Activated T-helper 1 cell treated with anti-CD3 and anti-CD28 coated beads, Interleukin-12 subunit alpha, Interleukin-12 subunit beta, Interleukin-2, Interleukin-4 antibody, amounts not matched to agents 30 ng/mL and 10 ng/mL and 1 ng/mL, durations not matched to agents 14 hours and 24 hours and 36 hours (primary cell): ENCODE measurements at regions of chr2 and their contacts with region 1.

Region 1: DNA sequence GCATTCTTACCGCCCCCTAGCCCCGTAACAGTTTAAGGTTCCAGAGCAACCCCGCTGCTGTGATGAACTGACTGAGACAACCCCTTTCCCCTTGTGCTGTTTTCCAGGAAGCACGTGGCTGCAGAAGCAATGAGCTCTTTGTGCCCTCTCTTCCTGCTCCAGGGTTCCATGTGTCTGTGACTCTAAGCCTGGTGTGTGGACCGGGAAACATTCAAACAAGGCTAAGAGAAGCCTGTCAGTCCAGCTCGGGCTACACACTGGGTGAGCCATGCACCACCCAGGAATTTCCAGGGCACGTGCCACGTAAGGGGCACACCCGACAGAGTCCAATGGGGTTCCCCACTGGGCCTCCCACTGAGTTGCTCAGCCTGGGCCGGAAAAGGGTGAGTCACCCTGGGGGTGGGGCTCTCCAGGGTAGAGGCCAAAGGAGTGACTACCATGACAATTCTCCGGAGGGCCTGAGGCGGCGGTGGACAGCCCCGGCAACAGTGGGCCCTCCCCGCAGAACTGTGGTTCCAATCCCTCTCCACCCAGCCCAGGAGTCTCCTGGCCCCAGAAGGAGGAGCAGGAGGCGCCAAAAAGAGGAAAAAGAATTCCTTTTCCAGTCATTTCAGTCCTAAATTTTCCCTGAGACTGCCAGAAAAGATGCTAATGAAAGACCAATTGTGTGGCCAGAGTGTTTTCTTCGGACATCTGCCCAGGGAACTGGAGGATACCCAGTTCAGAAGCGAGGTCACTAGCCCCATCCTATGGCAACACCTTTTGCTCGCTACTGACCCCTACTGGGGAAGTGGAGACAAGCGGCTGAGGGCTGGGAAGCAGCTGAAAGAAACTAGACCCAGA is 157.8 kb upstream of the SLC1A4 start:
- DNase-seq: peak; percentile 73
- H3K4me3 Mint-ChIP-seq: no peak overlapping the region
- H3K27ac Mint-ChIP-seq: peak overlapping the region; percentile 73
- H3K4me1 Mint-ChIP-seq: peaks cover 31% of the 10 kb centered on the region
- H3K27me3 Mint-ChIP-seq: peaks cover 1% of the 10 kb centered on the region

Region 2: GRCh38 chr2:64260817-64261216 is 570.5 kb before region 1 on chr2:
- intact Hi-C with region 1: no loop called
- DNase-seq: peak; percentile 29
- H3K4me3 Mint-ChIP-seq: peak overlapping the region; percentile 68
- H3K27ac Mint-ChIP-seq: peak overlapping the region; percentile 87
- H3K4me1 Mint-ChIP-seq: peaks cover 10% of the 10 kb centered on the region
- H3K27me3 Mint-ChIP-seq: peaks cover 2% of the 10 kb centered on the region

Region 3: DNA sequence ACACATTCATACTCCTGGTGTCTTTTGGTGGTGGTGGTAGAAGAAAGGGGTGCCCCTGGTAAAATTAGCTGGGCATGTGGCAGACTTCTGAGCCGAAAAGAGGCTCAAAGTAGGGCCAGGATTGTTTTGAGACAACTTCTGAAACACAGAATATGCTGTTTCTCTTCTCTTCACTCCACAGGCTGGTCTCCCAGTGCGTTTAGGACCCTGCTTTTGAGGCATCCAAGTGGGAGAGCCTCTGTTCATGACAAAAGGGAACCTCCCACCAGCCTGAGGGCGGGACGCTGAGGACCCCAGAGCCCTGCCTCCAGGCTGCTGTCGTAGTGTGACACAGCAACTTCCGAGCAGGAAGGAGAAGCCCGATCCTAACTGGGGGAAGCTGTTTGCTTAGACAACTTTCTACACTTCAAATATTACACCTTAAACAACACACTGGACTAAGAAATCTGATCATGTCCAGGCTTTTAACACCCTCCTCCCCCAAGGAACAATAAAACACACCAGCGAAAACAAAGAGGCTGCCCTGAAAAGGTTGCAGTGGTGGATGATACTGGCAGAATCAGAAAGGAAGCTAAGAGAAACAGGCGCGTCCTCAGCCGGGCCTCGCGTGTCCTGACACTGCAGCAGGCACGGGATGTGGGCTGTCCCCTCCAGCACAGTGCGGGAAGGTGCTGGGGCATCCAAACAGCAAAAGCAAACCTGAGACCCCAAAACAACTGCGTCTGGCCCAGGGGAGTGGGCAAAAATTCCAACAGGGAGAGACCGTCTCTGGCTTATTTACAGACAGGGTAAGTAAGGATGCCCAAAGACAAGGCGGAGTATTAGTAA is 187.0 kb before region 1 on chr2:
- intact Hi-C with region 1: loop called (anchors 1 kb)
- DNase-seq: peak; percentile 51
- H3K4me3 Mint-ChIP-seq: peak overlapping the region; percentile 86
- H3K27ac Mint-ChIP-seq: peak overlapping the region; percentile 90
- H3K4me1 Mint-ChIP-seq: peaks cover 82% of the 10 kb centered on the region
- H3K27me3 Mint-ChIP-seq: peaks cover 3% of the 10 kb centered on the region

Region 4: DNA sequence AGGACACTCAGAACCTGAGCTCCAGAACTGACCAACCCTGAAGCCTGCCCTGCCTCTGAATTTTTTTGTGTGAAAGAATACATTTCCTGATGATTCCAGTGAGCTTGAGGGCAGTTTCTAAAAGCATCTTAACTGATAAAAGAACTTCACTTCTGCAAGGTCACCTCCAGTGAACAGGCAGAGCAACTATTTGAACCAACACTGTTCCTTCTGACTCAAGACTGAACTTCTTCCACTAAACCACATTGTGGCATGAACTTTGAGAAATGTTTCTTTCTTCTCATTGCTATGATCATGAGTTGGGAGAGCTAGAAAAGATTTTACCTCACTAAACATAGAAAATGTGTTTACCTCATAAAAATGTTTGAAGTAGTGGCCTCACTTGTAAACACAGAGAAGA is 93.8 kb before region 1 on chr2:
- intact Hi-C with region 1: loop called (anchors 2 kb)
- DNase-seq: no peak
- H3K4me3 Mint-ChIP-seq: peak overlapping the region; percentile 46
- H3K27ac Mint-ChIP-seq: peak overlapping the region; percentile 91
- H3K4me1 Mint-ChIP-seq: peaks cover 54% of the 10 kb centered on the region
- H3K27me3 Mint-ChIP-seq: no peaks in the 10 kb centered on the region

Region 5: GRCh38 chr2:64807417-64807816 is 23.9 kb before region 1 on chr2:
- intact Hi-C with region 1: loop called (anchors 1 kb)
- DNase-seq: peak; percentile 12
- H3K4me3 Mint-ChIP-seq: peak overlapping the region; percentile 57
- H3K27ac Mint-ChIP-seq: peak overlapping the region; percentile 80
- H3K4me1 Mint-ChIP-seq: peaks cover 37% of the 10 kb centered on the region
- H3K27me3 Mint-ChIP-seq: no peaks in the 10 kb centered on the region

Region 6: DNA sequence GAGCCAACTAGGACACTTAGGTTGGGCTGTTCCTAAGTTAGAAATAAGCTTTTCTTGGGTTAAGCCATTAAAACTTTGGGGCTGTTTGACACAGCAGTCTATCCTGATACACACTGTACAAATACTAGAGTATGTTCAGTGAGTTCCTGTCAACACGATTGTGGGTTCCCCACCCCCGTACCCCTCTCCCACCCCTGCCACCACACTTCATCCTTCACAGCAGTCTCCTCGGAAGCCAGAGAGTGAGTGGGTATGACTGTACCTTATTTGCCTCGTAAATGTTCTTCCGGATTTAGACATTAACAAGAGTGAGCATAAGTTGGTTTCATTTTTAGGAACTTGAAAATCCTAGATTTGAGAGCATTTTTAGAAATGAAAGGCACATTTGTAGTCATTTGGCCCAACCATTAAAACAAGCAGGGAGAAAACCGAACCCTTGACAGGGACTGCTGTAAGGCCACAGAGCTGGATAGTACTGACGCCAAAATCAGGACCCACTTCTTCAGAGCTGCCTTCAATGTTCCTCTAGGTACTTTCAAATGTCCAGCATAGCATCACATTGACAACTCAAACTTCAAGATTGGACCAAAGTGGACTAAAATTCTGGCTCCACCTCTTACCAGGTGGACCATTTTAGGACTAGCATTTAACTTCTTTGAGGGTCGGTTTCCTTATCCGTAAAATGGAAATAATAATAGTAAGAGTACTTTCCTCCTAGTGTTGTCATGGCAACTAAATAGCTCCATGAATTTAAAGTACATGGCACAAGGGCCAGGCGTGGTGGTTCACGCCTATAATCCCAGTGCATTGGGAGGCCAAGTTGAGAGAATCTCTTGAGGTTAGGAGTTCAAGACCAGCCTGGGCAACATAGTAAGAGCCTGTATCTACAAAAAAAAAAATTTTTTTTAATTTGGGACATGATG is 11.3 kb before region 1 on chr2:
- intact Hi-C with region 1: loop called (anchors 1 kb)
- DNase-seq: peak; percentile 30
- H3K4me3 Mint-ChIP-seq: peak overlapping the region; percentile 68
- H3K27ac Mint-ChIP-seq: peak overlapping the region; percentile 93
- H3K4me1 Mint-ChIP-seq: peaks cover 39% of the 10 kb centered on the region
- H3K27me3 Mint-ChIP-seq: peaks cover 2% of the 10 kb centered on the region

Region 7: DNA sequence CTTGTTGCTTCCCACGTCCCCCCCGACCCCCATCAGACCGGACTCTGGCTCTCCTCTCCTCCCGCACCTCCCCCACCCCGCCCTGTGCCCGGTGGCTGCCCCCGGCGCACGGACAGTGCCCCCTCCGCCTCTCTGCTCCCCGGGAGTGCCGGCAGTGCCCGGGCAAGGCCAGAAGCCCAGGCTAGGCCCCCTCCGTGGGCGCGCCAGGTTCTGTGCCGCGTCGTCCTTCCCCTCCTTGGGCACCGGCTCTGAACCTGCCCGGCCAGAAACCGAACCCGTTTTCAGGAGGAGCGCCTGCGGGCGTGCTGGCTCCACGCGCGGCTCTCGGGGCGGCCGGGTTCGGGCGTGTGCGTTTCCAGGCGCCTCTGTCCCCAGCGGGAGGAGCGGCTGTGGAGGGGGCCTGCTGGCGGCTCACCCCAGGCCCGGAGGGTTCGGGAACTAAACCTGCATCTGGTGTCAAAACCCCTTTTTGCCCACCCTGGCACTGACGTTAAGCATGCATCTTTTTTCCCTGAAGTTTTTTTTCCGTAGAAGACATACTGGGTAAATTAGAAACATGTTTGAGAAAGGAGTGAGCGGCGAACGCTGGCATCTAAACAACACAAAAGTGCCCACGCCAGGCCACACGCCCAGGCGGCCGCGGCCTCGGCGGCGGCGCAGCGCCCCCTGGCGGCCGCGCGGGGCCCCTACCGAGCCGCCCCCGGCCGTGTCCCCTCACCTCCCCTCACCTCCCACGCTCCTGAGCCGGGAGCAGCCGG is 33.9 kb after region 1 on chr2:
- intact Hi-C with region 1: loop called (anchors 1 kb)
- DNase-seq: peak; percentile 61
- H3K4me3 Mint-ChIP-seq: peak overlapping the region; percentile 78
- H3K27ac Mint-ChIP-seq: peak overlapping the region; percentile 60
- H3K4me1 Mint-ChIP-seq: peaks cover 6% of the 10 kb centered on the region
- H3K27me3 Mint-ChIP-seq: peaks cover 13% of the 10 kb centered on the region